Dorsolateral prefrontal cortex (tissue), 120 donors: ENCODE measurements at regions of chr4 and their contacts with region 1.

Region 1: GRCh38 chr4:110631584-110632505 is 9.0 kb upstream of the PITX2 start:
- DNase-seq: peak in 7 of 10 donors; percentile 42 to 78 (median 52)
- H3K4me3 ChIP-seq: peak overlapping the region in 52 of 59 donors; percentile 1 to 64 (median 38)
- H3K27ac ChIP-seq: no peak overlapping the region
- H3K27me3 ChIP-seq: peaks cover 52 to 100% (median 100%) of the 10 kb centered on the region in 45 donors
- CTCF ChIP-seq: peak; percentile 19 to 82 (median 69)

Region 2: GRCh38 chr4:111283061-111283677 is 651.3 kb after region 1 on chr4:
- intact Hi-C with region 1: loop called in 1 of 2 experiments (anchors 5 kb)
- DNase-seq: peak in 5 of 10 donors; percentile 8 to 50 (median 36)
- H3K4me3 ChIP-seq: no peak overlapping the region
- H3K27ac ChIP-seq: no peak overlapping the region
- H3K27me3 ChIP-seq: peaks cover 0 to 17% (median 0%) of the 10 kb centered on the region in 45 donors
- CTCF ChIP-seq: peak; percentile 44 to 81 (median 65)

Region 3: GRCh38 chr4:111475001-111475400 is 843.2 kb after region 1 on chr4:
- intact Hi-C with region 1: loop called in 1 of 2 experiments (anchors 2 kb)
- DNase-seq: peak in 5 of 10 donors; percentile 5 to 47 (median 32)
- H3K4me3 ChIP-seq: no peak overlapping the region
- H3K27ac ChIP-seq: no peak overlapping the region
- H3K27me3 ChIP-seq: peaks cover 0 to 13% (median 0%) of the 10 kb centered on the region in 45 donors
- CTCF ChIP-seq: peak in 52 of 56 donors; percentile 19 to 76 (median 56)

Region 4: DNA sequence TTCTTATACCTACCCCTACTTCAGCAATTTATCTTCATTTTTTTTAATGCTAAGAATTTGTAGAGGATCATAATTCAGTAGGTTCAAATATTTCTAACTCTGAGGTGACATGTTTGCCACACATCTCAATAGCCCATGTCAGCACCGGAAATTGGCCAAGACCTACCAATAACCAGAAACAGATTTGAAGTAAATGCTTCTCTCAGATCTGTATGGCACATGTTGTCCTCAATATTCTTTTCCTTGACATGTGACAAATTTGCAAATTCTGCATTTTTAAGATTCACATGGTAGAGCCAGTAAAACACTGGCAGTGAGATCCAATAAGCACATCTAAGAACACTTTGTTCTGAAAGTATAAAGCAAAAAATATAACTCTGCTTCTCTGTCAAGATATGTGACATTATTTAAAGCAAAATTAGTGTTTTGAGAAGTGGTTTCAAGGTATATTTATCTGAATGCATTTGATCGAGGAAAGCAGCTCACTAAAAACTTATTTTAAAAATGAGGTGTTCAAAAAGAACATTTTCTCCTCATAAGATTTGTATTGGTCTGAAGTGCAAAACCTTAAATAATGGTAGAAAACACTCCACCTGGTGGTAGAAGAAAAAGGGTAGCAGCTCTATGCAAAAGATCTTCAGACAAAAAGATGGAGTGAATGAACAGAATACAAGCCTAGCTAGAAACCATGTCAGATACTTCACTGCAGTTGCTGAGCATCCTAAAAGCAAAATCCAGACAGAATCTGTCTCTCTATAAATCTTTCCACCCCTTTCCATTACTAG is 999.6 kb after region 1 on chr4:
- intact Hi-C with region 1: loop called (anchors 2 to 5 kb)
- DNase-seq: no peak
- H3K4me3 ChIP-seq: no peak overlapping the region
- H3K27ac ChIP-seq: no peak overlapping the region
- H3K27me3 ChIP-seq: peaks cover 0 to 66% (median 18%) of the 10 kb centered on the region in 45 donors
- CTCF ChIP-seq: peak in 53 of 56 donors; percentile 24 to 62 (median 44)

Region 5: GRCh38 chr4:111854494-111855087 is 1222.7 kb after region 1 on chr4:
- intact Hi-C with region 1: loop called in 1 of 2 experiments (anchors 10 kb)
- DNase-seq: peak in 2 of 10 donors; percentile 4 to 22
- H3K4me3 ChIP-seq: no peak overlapping the region
- H3K27ac ChIP-seq: no peak overlapping the region
- H3K27me3 ChIP-seq: peaks cover 0 to 9% (median 0%) of the 10 kb centered on the region in 45 donors
- CTCF ChIP-seq: peak; percentile 56 to 90 (median 77)